Body of pancreas (tissue), 4 donors: ENCODE measurements at regions of chr2 and their contacts with region 1.

Region 1: DNA sequence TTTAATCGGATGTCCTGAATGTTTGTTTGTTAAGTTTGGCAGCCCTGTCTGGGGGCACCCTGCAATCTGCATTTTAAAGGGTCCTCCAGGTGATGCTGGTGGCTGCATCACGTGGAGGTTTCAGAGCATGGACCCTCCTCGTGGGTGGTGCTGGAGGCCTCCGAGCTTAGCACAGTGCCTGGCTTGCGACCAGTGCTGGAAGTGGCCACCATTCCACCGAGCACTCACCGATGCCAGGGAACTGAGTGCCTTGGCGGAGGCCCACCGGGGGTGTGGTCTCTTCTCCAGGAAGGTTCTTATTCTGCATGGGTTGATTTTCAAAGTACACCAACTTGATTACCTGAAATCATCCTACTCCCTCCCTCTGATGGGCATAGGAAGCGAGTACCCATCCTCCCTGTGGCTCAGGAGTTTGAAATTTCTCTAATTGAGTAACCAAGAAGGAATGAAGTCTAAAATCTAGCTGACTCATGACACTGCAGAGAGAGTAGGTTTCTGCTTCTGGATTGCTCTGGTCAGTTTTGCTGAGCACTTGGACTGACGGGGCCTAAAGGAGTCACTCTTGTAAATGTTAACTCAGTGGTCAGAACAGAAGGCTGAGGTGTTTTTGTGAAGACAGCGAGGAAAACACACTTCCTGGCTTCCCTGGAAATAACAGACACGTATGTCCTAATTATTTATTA is 58.1 kb upstream of the SLC66A3 start:
- DNase-seq: no peak
- ATAC-seq: no peak
- H3K4me3 ChIP-seq: no peak overlapping the region
- H3K27ac ChIP-seq: no peak overlapping the region
- H3K4me1 ChIP-seq: no peaks in the 10 kb centered on the region
- H3K27me3 ChIP-seq: no peaks in the 10 kb centered on the region
- CTCF ChIP-seq: no peak
- POLR2A ChIP-seq: no peak

Region 2: GRCh38 chr2:10963155-10963554 is 134.0 kb before region 1 on chr2:
- intact Hi-C with region 1: loop called (anchors 10 kb)
- DNase-seq: no peak
- ATAC-seq: no peak
- H3K4me3 ChIP-seq: no peak overlapping the region
- H3K27ac ChIP-seq: no peak overlapping the region
- H3K4me1 ChIP-seq: no peaks in the 10 kb centered on the region
- H3K27me3 ChIP-seq: no peaks in the 10 kb centered on the region
- CTCF ChIP-seq: no peak
- POLR2A ChIP-seq: no peak